ENCODE measurements at regions of chr6 and their contacts with region 1.

Region 1: GRCh38 chr6:18387061-18387721 is at the start of gene RNF144B:
- H3K4me3 Mint-ChIP-seq: peak within 1 kb of the TSS; percentile 94
- H3K27ac Mint-ChIP-seq: peak within 1 kb of the TSS; percentile 89
- H3K4me1 Mint-ChIP-seq: peaks cover 38% of the 10 kb centered on the region
- H3K27me3 Mint-ChIP-seq: no peaks in the 10 kb centered on the region

Region 2: DNA sequence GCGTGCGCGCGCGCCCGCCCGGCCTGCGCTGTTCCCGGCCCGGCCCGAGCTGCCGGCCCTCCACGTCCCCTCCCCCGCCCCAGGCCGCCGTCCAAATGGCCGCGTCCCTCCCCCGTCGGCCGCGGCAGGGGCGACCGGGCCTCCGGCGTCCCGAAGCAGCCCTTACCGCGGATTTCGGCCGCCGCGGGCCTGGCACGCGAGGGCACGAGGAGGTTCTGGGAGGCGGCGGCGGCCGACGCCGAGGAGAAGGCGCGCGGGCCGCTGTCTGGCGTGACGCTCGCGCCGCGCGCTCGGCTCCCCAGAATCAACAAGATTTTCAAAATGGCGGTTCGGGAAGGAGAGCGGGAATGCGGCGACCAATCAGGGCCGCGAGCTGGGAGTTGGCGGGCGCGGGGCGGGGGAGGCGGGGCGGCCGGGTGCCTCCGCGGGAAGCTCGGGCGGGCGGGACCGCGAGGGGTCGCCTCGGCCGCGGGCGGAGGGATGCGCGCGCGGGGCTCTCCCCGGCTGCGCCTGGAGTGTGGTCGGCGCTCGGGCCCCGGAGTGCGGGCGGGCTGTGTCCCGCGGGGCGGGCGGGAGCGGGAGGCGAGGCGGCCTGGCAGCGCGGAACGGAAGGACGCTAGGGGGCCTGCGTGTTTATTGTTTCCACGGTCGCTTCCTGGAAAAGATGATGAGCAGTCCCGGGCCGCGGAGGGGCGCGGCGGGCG is 122.8 kb before region 1 on chr6 and contains the start of gene DEK:
- intact Hi-C with region 1: loop called (anchors 10 kb)
- H3K4me3 Mint-ChIP-seq: peak within 1 kb of the TSS; percentile 98
- H3K27ac Mint-ChIP-seq: peak within 1 kb of the TSS; percentile 96
- H3K4me1 Mint-ChIP-seq: peaks cover 40% of the 10 kb centered on the region
- H3K27me3 Mint-ChIP-seq: no peaks in the 10 kb centered on the region

Region 3: GRCh38 chr6:18323935-18324705 is 63.1 kb before region 1 on chr6:
- intact Hi-C with region 1: loop called (anchors 2 kb)
- H3K4me3 Mint-ChIP-seq: no peak overlapping the region
- H3K27ac Mint-ChIP-seq: peak overlapping the region; percentile 63
- H3K4me1 Mint-ChIP-seq: peaks cover 51% of the 10 kb centered on the region
- H3K27me3 Mint-ChIP-seq: no peaks in the 10 kb centered on the region

Region 4: GRCh38 chr6:18350712-18351111 is 36.5 kb before region 1 on chr6:
- intact Hi-C with region 1: loop called (anchors 5 kb)
- H3K4me3 Mint-ChIP-seq: no peak overlapping the region
- H3K27ac Mint-ChIP-seq: peak overlapping the region; percentile 27
- H3K4me1 Mint-ChIP-seq: peaks cover 29% of the 10 kb centered on the region
- H3K27me3 Mint-ChIP-seq: no peaks in the 10 kb centered on the region

Region 5: GRCh38 chr6:18400831-18401446 is 13.7 kb after region 1 on chr6:
- intact Hi-C with region 1: loop called (anchors 1 kb)
- H3K4me3 Mint-ChIP-seq: peak overlapping the region; percentile 34
- H3K27ac Mint-ChIP-seq: peak overlapping the region; percentile 94
- H3K4me1 Mint-ChIP-seq: peaks cover 80% of the 10 kb centered on the region
- H3K27me3 Mint-ChIP-seq: no peaks in the 10 kb centered on the region

Region 6: GRCh38 chr6:18503593-18504231 is 116.5 kb after region 1 on chr6:
- intact Hi-C with region 1: loop called (anchors 5 kb)
- H3K4me3 Mint-ChIP-seq: peak overlapping the region; percentile 56
- H3K27ac Mint-ChIP-seq: peak overlapping the region; percentile 97
- H3K4me1 Mint-ChIP-seq: peaks cover 64% of the 10 kb centered on the region
- H3K27me3 Mint-ChIP-seq: no peaks in the 10 kb centered on the region

Region 7: DNA sequence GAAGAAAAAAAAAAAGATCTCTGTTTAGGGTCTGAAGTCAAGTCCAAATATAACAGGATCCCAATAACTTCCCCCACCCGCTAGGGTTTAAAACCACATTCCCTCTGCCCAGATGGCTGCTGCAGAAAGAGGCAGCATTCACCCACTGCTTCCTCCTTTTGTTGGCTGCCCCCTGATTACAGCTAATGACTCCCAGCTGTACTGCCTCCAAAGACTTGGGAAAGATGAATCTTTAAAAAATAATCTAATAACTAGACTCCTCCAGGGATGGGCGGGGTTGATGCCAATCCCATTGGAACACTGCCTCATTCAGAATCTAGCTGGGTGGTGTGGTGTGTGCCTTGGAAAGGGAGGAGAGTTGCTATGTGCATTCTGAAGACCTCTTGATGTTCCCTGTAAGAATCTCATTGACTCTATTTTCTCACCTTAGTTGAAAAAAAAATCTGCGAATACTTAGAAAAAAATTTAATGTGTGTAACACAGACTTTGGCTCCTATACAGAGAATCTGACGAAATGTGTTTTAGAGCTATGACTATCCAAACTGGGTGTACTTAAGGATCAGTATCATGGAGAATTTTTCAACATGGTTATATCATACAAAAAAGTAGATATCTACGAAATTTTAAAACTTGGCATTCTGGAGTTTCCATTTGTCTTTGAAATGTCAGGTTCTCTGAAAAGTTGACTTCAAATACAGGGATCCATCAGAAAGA is 174.0 kb after region 1 on chr6:
- intact Hi-C with region 1: no loop called
- H3K4me3 Mint-ChIP-seq: no peak overlapping the region
- H3K27ac Mint-ChIP-seq: no peak overlapping the region
- H3K4me1 Mint-ChIP-seq: peaks cover 16% of the 10 kb centered on the region
- H3K27me3 Mint-ChIP-seq: peaks cover 10% of the 10 kb centered on the region